ENCODE measurements at regions of chr3 and their contacts with region 1.

Region 1: GRCh38 chr3:157159762-157160657 is at the start of gene CCNL1:
- DNase-seq: peak; percentile 99
- ATAC-seq: peak; percentile 81
- H3K4me3 ChIP-seq: peak within 1 kb of the TSS; percentile 78 to 100 (median 95)
- H3K4me3 Mint-ChIP-seq: peak within 1 kb of the TSS; percentile 99
- H3K27ac ChIP-seq: peak within 1 kb of the TSS; percentile 99 to 100
- H3K27ac Mint-ChIP-seq: peak within 1 kb of the TSS; percentile 100
- H3K4me1 ChIP-seq: peaks cover 46 to 48% of the 10 kb centered on the region in 2 donors
- H3K4me1 Mint-ChIP-seq: peaks cover 51% of the 10 kb centered on the region
- H3K27me3 ChIP-seq: no peaks in the 10 kb centered on the region
- H3K27me3 Mint-ChIP-seq: no peaks in the 10 kb centered on the region
- CTCF ChIP-seq: no peak
- total RNA-seq, gene CCNL1: 309 and 322 TPM in 2 replicates

Region 2: GRCh38 chr3:155870133-155870944 is 1289.7 kb before region 1 on chr3 and contains the start of gene GMPS:
- CTCF ChIA-PET with region 1: no interaction called
- POLR2A ChIA-PET with region 1: interaction called, 4 read pairs
- intact Hi-C with region 1: loop called (anchors 5 kb)
- DNase-seq: peak; percentile 96
- ATAC-seq: peak; percentile 95
- H3K4me3 ChIP-seq: peak within 1 kb of the TSS; percentile 65 to 95 (median 93)
- H3K4me3 Mint-ChIP-seq: peak within 1 kb of the TSS; percentile 96
- H3K27ac ChIP-seq: peak within 1 kb of the TSS; percentile 75 to 86
- H3K27ac Mint-ChIP-seq: peak within 1 kb of the TSS; percentile 94
- H3K4me1 ChIP-seq: peaks cover 14 to 19% of the 10 kb centered on the region in 2 donors
- H3K4me1 Mint-ChIP-seq: peaks cover 23% of the 10 kb centered on the region
- H3K27me3 ChIP-seq: no peaks in the 10 kb centered on the region
- H3K27me3 Mint-ChIP-seq: no peaks in the 10 kb centered on the region
- CTCF ChIP-seq: peak; percentile 45
- total RNA-seq, gene GMPS: 28.0 and 30.8 TPM in 2 replicates

Region 3: DNA sequence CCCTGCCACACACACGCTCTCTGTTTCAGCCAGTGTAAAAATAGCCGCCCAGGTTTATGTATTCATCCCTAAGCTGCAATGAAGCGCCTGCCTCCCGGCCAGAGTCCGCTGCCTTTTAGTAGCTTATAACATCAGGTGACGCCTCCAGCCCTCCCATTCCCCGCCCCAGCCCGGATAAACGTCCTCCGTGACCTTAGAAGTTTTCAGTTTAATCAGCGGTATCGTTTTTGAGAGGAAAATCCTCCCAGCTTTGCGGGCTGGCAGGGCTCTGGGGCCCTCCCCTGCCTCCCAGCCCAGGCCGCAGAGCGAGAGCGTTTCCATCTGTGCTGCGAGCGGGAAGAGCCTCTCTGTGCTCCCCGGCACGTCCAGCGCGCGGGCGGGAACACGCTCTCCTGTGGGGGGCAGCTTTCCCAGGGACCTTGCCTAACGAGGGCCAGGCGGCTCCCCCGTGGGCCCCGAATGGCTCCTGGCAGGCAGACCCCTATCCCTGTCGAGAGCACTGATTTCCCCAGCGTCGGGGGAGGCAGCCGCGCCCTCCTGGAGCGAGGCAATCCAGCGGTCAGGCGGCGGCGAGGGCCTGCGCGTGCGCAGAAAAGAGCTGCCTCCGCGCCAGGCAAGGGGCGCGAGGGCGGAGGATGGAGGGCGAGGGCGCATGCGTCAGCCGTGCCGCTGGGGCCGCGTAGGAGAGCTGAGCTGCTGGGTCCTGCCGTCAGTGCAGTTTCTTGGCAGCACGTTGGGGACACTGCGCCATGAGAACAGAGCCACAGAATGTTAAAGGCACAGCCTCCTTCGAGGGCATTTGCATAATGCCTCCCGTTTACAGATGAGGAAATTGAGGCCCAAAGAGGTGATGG is 71.2 kb before region 1 on chr3:
- CTCF ChIA-PET with region 1: no interaction called
- POLR2A ChIA-PET with region 1: interaction called, 14 read pairs
- intact Hi-C with region 1: loop called (anchors 1 kb)
- DNase-seq: peak; percentile 96
- ATAC-seq: peak; percentile 91
- H3K4me3 ChIP-seq: peak overlapping the region; percentile 56 to 92 (median 80)
- H3K4me3 Mint-ChIP-seq: peak overlapping the region; percentile 94
- H3K27ac ChIP-seq: peak overlapping the region; percentile 76 to 98
- H3K27ac Mint-ChIP-seq: peak overlapping the region; percentile 98
- H3K4me1 ChIP-seq: peaks cover 19 to 25% of the 10 kb centered on the region in 2 donors
- H3K4me1 Mint-ChIP-seq: peaks cover 25% of the 10 kb centered on the region
- H3K27me3 ChIP-seq: peaks cover 0 to 2% (median 0%) of the 10 kb centered on the region in 4 experiments
- H3K27me3 Mint-ChIP-seq: peaks cover 8% of the 10 kb centered on the region
- CTCF ChIP-seq: no peak

Region 4: DNA sequence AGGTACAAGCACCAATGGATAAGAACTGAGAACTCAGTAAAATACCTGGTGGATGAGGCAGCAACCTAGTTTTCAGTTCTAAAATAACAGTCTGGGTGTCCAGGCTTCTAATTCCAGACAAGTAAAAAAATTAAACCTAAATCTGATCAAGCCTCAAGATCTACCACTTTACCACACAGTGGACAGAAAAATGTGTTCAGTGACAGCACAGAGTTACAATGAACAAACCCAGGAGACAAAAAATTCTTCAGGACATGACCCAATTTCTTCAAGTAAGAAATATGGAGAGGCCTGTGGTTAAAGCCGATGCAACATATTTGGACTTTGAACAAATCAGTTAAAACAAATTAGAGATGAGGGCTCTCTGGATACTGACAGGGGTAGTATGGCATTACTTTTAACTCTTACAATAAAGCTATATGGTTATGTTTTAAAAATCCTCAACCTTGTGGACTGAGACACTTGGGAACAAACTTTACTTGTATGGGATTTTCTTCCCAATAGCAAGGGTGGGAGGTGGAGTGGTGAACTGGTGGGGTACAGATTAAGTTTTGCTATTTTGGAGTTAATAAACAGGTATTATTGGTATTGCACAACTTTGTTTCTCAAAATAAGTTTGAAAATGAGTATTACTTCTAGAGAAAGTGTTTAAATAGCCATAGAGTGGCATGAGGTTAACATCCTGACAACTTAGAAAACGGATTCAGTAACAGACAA is 14.2 kb before region 1 on chr3:
- CTCF ChIA-PET with region 1: interaction called, 3 read pairs
- POLR2A ChIA-PET with region 1: interaction called, 3 read pairs
- intact Hi-C with region 1: loop called (anchors 1 kb)
- DNase-seq: no peak
- ATAC-seq: no peak
- H3K4me3 ChIP-seq: no peak overlapping the region
- H3K4me3 Mint-ChIP-seq: no peak overlapping the region
- H3K27ac ChIP-seq: no peak overlapping the region
- H3K27ac Mint-ChIP-seq: peak overlapping the region; percentile 16
- H3K4me1 ChIP-seq: no peaks in the 10 kb centered on the region
- H3K4me1 Mint-ChIP-seq: peaks cover 3% of the 10 kb centered on the region
- H3K27me3 ChIP-seq: no peaks in the 10 kb centered on the region
- H3K27me3 Mint-ChIP-seq: no peaks in the 10 kb centered on the region
- CTCF ChIP-seq: no peak

Region 5: GRCh38 chr3:157201648-157202278 is 41.8 kb after region 1 on chr3:
- CTCF ChIA-PET with region 1: interaction called, 4 read pairs
- POLR2A ChIA-PET with region 1: interaction called, 4 read pairs
- intact Hi-C with region 1: loop called (anchors 1 kb)
- DNase-seq: peak; percentile 48
- ATAC-seq: peak; percentile 10
- H3K4me3 ChIP-seq: no peak overlapping the region
- H3K4me3 Mint-ChIP-seq: no peak overlapping the region
- H3K27ac ChIP-seq: no peak overlapping the region
- H3K27ac Mint-ChIP-seq: no peak overlapping the region
- H3K4me1 ChIP-seq: no peaks in the 10 kb centered on the region
- H3K4me1 Mint-ChIP-seq: peaks cover 5% of the 10 kb centered on the region
- H3K27me3 ChIP-seq: no peaks in the 10 kb centered on the region
- H3K27me3 Mint-ChIP-seq: no peaks in the 10 kb centered on the region
- CTCF ChIP-seq: peak; percentile 63

Region 6: GRCh38 chr3:158109804-158110657 is 950.0 kb after region 1 on chr3 and contains the start of gene RSRC1:
- CTCF ChIA-PET with region 1: no interaction called
- POLR2A ChIA-PET with region 1: no interaction called
- intact Hi-C with region 1: loop called (anchors 5 kb)
- DNase-seq: peak; percentile 89
- ATAC-seq: peak; percentile 87
- H3K4me3 ChIP-seq: peak within 1 kb of the TSS; percentile 85 to 93 (median 87)
- H3K4me3 Mint-ChIP-seq: peak within 1 kb of the TSS; percentile 87
- H3K27ac ChIP-seq: peak within 1 kb of the TSS; percentile 68 to 83
- H3K27ac Mint-ChIP-seq: peak within 1 kb of the TSS; percentile 75
- H3K4me1 ChIP-seq: peaks cover 42 to 54% of the 10 kb centered on the region in 2 donors
- H3K4me1 Mint-ChIP-seq: peaks cover 45% of the 10 kb centered on the region
- H3K27me3 ChIP-seq: peaks cover 4 to 40% (median 35%) of the 10 kb centered on the region in 4 experiments
- H3K27me3 Mint-ChIP-seq: peaks cover 35% of the 10 kb centered on the region
- CTCF ChIP-seq: no peak
- total RNA-seq, gene RSRC1: 46.3 and 54.6 TPM in 2 replicates